ENCODE measurements at regions of chr12 and their contacts with region 1.

Region 1: DNA sequence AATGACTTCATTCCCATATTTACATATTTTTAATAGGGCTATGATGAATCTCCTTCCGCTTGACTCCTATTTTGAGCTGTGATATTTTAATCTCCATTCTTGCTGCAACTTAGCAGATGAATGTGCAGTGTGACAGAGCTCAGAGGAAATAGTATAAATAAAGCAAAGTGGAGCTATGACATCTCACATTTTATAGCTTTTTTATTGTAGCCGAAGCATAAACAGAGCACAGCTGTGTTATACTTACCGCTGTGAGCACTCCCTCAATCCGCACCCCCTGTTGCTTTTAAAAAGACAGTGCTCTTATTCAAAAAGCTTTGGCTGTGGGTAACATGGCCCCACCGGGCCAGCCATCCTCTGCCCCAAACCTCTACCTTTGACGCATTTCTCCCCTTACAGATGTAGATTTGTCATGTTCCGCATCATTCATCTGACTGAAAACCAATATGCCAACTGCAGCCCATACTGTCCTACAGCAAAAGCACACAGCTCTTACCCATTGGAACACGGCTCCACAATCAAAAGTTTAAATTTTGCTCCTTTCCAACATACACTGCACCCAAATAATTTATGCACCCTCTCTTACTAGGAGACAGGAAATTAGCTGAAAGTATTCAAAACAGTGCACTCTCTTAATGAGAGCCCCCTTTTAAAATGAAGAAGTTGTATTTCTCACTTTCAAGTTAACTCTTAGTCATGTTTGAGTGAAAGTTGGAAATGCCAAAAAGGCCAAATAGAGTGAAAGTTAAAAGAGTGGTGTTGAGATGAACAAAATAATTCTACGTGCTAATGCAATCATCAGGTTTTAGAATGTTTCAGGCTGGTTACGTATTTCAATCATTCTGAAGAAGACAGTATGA is 429.3 kb upstream of the SOX5 start:
- DNase-seq: peak; percentile 26
- ATAC-seq: peak; percentile 76
- H3K4me3 Mint-ChIP-seq: peak overlapping the region; percentile 84
- H3K27ac Mint-ChIP-seq: peak overlapping the region; percentile 95
- H3K4me1 Mint-ChIP-seq: peaks cover 40% of the 10 kb centered on the region
- H3K27me3 Mint-ChIP-seq: no peaks in the 10 kb centered on the region
- CTCF ChIP-seq: no peak

Region 2: GRCh38 chr12:24307153-24307552 is 71.6 kb before region 1 on chr12:
- CTCF ChIA-PET with region 1: no interaction called
- POLR2A ChIA-PET with region 1: no interaction called
- intact Hi-C with region 1: no loop called
- DNase-seq: no peak
- ATAC-seq: no peak
- H3K4me3 Mint-ChIP-seq: no peak overlapping the region
- H3K27ac Mint-ChIP-seq: no peak overlapping the region
- H3K4me1 Mint-ChIP-seq: peaks cover 22% of the 10 kb centered on the region
- H3K27me3 Mint-ChIP-seq: no peaks in the 10 kb centered on the region
- CTCF ChIP-seq: no peak

Region 3: DNA sequence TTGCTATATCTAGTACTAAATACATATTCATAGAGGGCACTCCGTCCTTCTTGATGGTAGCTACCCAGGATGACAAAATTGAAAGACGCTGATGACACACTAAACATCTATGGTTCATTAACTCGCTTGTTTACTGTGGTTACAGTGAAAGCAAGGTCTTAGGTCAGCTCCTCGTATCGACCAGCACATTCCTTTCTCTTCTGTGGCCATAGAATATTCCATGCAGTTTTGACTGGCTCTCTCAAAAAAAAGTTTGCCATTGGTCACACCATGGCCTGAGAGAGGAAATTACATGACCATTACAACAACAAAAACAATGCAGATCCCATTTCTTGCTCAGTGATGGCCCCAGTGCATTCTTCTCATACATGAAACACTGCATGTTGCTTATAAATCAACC is 17.9 kb before region 1 on chr12:
- CTCF ChIA-PET with region 1: interaction called, 7 read pairs
- POLR2A ChIA-PET with region 1: interaction called, 24 read pairs
- intact Hi-C with region 1: loop called (anchors 1 kb)
- DNase-seq: no peak
- ATAC-seq: peak; percentile 53
- H3K4me3 Mint-ChIP-seq: peak overlapping the region; percentile 69
- H3K27ac Mint-ChIP-seq: peak overlapping the region; percentile 76
- H3K4me1 Mint-ChIP-seq: peaks cover 65% of the 10 kb centered on the region
- H3K27me3 Mint-ChIP-seq: no peaks in the 10 kb centered on the region
- CTCF ChIP-seq: no peak

Region 4: GRCh38 chr12:24414480-24414879 is 35.7 kb after region 1 on chr12:
- CTCF ChIA-PET with region 1: interaction called, 7 read pairs
- POLR2A ChIA-PET with region 1: interaction called, 32 read pairs
- intact Hi-C with region 1: loop called (anchors 1 kb)
- DNase-seq: no peak
- ATAC-seq: peak; percentile 36
- H3K4me3 Mint-ChIP-seq: peak overlapping the region; percentile 80
- H3K27ac Mint-ChIP-seq: peak overlapping the region; percentile 89
- H3K4me1 Mint-ChIP-seq: peaks cover 61% of the 10 kb centered on the region
- H3K27me3 Mint-ChIP-seq: no peaks in the 10 kb centered on the region
- CTCF ChIP-seq: no peak

Region 5: GRCh38 chr12:24596768-24597388 is 218.1 kb after region 1 on chr12:
- CTCF ChIA-PET with region 1: no interaction called
- POLR2A ChIA-PET with region 1: no interaction called
- intact Hi-C with region 1: loop called (anchors 5 kb)
- DNase-seq: no peak
- ATAC-seq: no peak
- H3K4me3 Mint-ChIP-seq: no peak overlapping the region
- H3K27ac Mint-ChIP-seq: no peak overlapping the region
- H3K4me1 Mint-ChIP-seq: peaks cover 42% of the 10 kb centered on the region
- H3K27me3 Mint-ChIP-seq: no peaks in the 10 kb centered on the region
- CTCF ChIP-seq: no peak

Region 6: DNA sequence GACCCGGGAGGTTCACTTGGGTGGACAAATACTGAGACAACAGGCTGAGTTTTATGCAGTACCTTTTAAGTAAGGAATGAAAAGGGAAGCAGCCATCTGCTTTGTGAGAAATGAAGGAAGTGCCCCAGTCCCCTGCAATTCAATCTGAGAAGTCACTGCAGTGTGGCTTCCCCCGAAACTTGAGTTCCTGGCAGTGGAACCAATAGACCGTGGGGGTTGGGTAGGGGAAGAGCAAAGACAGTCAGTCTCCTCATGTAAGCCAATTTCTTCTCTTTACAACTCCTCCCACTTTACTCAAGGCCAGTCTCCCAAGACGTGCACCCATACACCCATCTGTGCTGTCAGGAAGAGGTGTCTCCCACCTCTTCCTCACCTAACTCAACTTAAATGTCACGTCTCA is 363.6 kb after region 1 on chr12:
- CTCF ChIA-PET with region 1: no interaction called
- POLR2A ChIA-PET with region 1: interaction called, 3 read pairs
- intact Hi-C with region 1: loop called (anchors 2 kb)
- DNase-seq: peak; percentile 29
- ATAC-seq: peak; percentile 87
- H3K4me3 Mint-ChIP-seq: peak overlapping the region; percentile 64
- H3K27ac Mint-ChIP-seq: peak overlapping the region; percentile 90
- H3K4me1 Mint-ChIP-seq: peaks cover 56% of the 10 kb centered on the region
- H3K27me3 Mint-ChIP-seq: no peaks in the 10 kb centered on the region
- CTCF ChIP-seq: no peak

Measured in activated B cell treated with CpG ODN at 0.5 μM for 24 hours (primary cell).